Cardiac septum (tissue), 1 donor: ENCODE measurements at regions of chr12 and their contacts with region 1.

Region 1: DNA sequence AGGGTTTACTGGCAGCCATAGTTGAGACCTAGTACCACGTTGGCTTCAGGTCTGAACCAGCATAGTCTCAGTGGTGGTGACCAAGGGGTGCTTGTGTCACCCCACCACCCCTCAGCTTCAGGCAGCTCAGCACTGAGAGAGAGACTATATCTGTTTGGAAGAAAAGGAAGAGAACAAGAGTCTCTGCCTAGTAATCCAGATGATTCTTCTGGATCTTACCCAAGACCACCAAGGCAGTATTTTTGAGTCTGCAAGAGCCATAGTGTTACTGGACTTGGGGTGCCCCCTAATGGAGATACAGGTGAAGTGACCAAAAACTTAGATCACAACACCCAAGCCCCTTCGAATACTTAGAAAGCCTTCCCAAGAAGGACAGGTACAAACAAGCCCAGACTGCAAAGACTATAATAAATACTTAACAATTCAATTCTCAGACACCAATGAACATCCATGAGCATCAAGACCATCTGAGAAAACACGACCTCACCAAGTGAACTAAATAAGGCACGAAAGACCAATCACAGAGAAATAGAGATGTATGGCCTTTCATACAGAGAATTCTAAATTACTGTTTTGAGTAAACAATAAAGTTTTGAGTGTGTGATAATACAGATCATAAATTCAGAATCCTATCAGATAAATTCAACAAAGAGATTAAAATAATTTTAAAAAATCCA is 107.0 kb downstream of the HELB start:
- DNase-seq: no peak

Region 2: GRCh38 chr12:66279123-66279712 is 130.1 kb before region 1 on chr12:
- intact Hi-C with region 1: loop called (anchors 5 kb)
- DNase-seq: no peak